ENCODE measurements at regions of chr18 and their contacts with region 1.

Region 1: DNA sequence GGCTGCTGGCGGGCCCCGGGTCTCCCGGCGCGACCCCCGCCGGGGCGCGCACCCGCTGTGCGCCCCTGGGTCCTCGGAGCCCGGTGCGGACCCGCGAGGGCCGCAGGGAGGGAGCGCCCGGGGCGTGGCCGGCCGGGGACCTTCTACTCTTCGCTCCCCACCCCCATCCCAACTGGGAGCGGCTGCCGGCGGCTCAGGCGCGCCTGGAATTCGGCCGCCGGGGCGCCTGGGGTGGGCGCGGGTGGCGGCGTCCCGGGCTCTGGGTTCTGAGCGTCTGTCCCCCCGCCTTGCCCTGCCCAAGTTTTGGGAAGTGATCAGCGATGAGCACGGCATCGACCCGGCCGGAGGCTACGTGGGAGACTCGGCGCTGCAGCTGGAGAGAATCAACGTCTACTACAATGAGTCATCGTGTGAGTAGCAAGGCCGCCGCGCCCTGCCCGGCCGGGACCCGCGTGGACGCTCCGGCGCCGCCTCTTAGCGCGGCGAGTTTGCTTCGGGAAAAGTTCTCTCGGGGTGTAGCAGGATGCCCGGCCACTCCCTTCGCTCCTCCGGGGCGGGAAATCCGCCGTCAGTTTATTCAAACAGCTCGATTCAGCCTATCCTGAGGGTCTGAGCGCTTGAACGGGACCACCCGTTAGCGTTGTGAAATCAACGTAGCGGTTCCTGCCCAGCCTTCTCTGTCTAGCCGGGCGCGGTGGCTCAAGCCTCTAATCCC is 502 bp downstream of the TUBB6 start:
- DNase-seq: peak; percentile 91

Region 2: DNA sequence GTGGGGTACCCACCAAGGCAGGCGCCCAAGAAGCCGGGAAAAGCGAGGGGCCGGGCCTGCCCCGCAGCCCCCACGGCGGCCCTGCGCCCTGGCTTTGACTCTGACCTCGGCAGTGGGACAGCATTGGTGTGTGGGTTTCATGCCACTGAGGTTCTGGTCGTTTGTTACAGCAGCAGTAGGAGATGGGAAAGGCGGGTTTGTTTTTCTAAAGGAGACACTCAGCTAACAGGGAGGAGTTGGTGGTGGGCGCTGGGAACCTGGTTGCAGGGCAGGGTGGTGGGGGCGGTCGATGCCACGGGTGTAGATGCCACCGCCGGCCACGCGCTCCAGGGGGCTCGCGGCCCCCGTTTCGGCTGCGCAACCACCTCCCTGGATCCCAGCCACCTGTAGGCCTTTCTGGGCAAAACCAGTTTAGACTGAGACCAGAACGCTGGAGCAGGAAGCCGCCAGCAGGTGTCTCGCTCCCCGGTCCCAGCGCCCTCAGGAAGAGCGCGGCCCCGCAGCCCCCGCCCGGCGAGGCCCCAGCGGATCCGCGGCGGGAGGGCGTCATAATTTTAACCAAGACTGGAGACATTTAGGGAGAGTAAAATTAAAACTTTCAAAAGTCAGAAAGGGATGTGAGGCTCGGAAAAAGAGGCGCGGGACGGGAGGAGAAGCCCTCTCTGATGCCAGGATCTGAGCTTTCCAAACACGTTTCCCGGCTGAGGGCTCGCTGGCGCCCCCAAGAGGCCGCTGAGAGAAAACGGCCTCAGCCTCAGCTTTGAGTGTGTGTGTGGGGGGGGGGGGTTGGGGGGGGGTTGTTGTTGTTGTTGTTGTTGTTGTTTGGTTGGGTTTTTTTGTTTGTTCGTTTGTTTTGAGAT is 36.9 kb before region 1 on chr18:
- intact Hi-C with region 1: loop called (anchors 5 kb)
- DNase-seq: no peak